Activated T-helper 2 cell treated with anti-CD3 and anti-CD28 coated beads, Interferon-gamma antibody, Interleukin-2, Interleukin-4, amounts not matched to agents 10 μg/mL and 5 μg/mL and 100 μg/mL, durations not matched to agents 14 hours and 24 hours and 36 hours (primary cell): ENCODE measurements at regions of chr10 and their contacts with region 1.

Region 1: DNA sequence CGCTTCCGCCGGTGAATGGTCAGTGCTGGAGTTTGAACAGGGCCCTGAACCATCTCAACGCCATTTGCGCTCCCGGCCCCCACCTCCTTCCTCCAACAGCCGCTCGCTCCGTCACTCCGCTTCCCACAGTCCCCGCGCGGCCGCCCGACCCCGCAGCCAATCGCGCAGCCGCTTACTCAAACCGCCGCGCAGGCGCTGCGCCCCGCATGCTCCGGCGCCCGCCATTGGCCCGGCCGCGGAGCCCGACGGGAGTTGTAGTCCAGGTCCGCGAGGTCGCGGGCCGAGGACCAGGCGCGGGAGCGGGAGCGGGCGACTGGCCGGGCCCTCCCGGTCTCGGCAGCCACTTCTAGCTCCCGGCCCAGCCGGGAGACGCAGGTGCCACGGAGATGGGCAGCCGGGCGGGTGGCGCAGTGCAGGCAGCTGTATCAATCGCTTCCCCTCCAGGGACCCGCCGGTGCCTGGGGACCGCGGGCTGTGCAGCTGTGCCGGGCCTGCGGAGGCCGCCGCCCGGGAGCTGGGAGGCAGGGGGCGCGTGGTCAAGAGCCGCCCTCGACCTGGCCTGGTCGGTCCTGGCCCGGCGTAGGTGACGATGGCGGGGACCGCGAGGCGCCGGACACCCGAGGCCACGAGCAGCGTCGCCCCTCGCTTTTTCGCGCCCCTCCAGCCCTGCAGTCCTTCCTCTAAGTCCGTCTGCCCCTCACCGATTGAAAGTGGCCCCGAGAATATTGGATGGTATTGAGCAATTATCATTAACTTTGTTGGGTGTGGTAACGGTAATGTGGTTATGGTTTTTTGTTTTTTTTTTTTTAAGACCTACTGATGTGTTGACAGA is at the start of gene WAPL:
- DNase-seq: peak; percentile 93
- H3K4me3 Mint-ChIP-seq: peak within 1 kb of the TSS; percentile 98
- H3K27ac Mint-ChIP-seq: peak within 1 kb of the TSS; percentile 89
- H3K4me1 Mint-ChIP-seq: peaks cover 46% of the 10 kb centered on the region
- H3K27me3 Mint-ChIP-seq: no peaks in the 10 kb centered on the region
- total RNA-seq, gene WAPL: 50.0 and 51.4 TPM in 2 replicates

Region 2: DNA sequence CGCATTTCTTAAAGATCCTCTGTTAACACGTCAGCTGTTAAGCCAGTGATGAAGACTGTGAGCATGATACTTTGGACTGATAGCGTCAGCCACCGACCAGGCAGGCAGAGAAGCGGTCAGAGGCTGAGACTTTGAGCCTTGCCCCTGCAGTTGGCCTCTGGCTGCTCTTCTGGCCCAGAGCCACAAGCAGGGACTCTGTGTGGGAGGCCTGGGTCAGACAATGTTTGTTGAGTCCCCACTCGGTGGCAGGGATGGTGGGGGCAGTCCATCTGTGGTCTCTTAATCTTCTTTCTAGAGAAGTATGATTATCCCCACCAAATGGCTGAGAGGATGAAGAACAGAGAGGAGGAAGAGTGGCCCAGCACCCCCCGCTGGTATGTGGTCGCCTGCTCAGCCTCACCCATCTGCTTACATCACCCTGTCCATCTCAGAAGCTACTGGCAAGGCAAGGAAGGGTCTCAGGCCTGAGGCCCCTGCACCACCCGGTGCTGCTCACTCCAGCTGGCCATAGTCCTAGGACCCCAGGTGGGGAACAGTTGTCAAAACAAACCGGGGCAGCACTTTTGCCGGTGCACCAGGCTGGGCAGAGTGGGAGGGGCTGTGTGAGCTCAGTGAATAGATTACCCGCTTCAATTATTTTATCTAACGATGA is 358.2 kb before region 1 on chr10:
- intact Hi-C with region 1: no loop called
- DNase-seq: no peak
- H3K4me3 Mint-ChIP-seq: no peak overlapping the region
- H3K27ac Mint-ChIP-seq: no peak overlapping the region
- H3K4me1 Mint-ChIP-seq: no peaks in the 10 kb centered on the region
- H3K27me3 Mint-ChIP-seq: no peaks in the 10 kb centered on the region

Region 3: DNA sequence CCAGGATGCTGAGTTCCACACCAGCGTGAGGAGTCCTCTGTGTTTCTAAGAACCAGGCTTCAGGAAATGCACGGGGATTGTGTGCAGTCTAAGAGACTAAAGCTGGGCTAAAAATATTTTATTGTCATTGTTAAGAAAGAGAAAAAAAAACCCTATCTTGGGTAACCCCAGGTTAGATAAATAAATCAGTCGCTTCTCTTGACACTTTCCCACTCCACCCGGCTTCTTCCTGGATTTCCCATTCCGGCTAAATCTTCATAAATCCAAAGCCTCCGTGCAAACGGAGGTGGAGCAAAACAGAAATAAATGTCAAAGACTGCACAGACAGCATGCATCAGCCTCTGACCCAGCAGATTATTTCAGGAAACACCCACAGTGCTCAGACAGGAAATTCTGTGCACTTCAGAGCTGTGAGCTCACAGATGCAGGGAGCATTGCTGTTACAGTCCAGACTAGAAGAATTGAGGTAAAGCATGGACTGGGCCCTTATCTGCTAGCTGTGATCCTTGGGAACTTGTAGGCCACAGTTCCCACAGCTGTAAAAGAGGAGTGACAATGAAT is 110.5 kb before region 1 on chr10:
- intact Hi-C with region 1: loop called (anchors 2 kb)
- DNase-seq: no peak
- H3K4me3 Mint-ChIP-seq: peak overlapping the region; percentile 61
- H3K27ac Mint-ChIP-seq: peak overlapping the region; percentile 94
- H3K4me1 Mint-ChIP-seq: peaks cover 48% of the 10 kb centered on the region
- H3K27me3 Mint-ChIP-seq: no peaks in the 10 kb centered on the region

Region 4: DNA sequence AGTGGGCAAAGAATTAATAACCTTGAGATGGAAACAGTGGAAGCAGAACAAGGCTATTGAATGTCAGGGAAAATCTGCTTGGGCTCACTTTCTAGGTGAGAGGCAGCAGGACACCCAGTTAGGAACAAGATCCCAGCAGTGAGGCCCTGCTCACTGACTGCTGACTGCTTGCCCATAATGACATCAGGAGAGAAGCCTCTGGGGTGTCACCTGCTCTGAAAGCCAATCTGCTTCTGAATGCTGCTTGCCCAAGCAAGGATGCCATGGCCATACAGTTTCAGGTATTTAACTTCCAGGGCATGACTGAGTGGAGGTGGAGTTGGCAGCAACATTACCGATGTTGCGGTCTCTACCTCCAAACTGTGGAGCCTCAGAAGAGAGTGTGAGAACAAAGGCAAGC is 11.4 kb after region 1 on chr10:
- intact Hi-C with region 1: loop called (anchors 1 kb)
- DNase-seq: no peak
- H3K4me3 Mint-ChIP-seq: no peak overlapping the region
- H3K27ac Mint-ChIP-seq: no peak overlapping the region
- H3K4me1 Mint-ChIP-seq: peaks cover 7% of the 10 kb centered on the region
- H3K27me3 Mint-ChIP-seq: no peaks in the 10 kb centered on the region

Region 5: GRCh38 chr10:86585037-86585725 is 63.3 kb after region 1 on chr10:
- intact Hi-C with region 1: loop called (anchors 1 kb)
- DNase-seq: peak; percentile 67
- H3K4me3 Mint-ChIP-seq: no peak overlapping the region
- H3K27ac Mint-ChIP-seq: no peak overlapping the region
- H3K4me1 Mint-ChIP-seq: no peaks in the 10 kb centered on the region
- H3K27me3 Mint-ChIP-seq: no peaks in the 10 kb centered on the region

Region 6: DNA sequence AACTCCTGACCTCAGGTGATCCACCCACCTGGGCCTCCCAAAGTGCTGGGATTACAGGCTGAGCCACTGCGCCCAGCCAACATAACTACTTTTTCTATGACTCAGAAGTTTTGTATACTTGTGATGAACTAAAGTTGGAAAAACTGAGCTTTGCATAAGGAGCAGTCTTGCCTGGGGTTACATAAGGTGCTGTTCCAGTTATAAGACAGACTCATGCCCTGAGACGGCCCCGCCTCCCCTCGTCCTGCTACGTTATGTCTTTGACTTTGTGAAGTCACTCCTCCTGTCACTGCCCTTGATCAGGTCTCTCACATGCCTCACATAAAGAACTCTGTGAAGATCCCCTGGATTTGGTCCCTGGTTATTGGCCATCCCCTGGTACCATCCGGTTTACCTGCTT is 92.0 kb after region 1 on chr10:
- intact Hi-C with region 1: no loop called
- DNase-seq: no peak
- H3K4me3 Mint-ChIP-seq: no peak overlapping the region
- H3K27ac Mint-ChIP-seq: no peak overlapping the region
- H3K4me1 Mint-ChIP-seq: no peaks in the 10 kb centered on the region
- H3K27me3 Mint-ChIP-seq: peaks cover 5% of the 10 kb centered on the region